Naive thymus-derived CD4-positive, alpha-beta T cell (primary cell): ENCODE measurements at regions of chr18 and their contacts with region 1.

Region 1: GRCh38 chr18:46222710-46223360 is 118.7 kb downstream of the HAUS1 start:
- DNase-seq: peak in 2 of 9 donors; percentile 7 to 16
- ATAC-seq: peak; percentile 75
- H3K4me3 ChIP-seq: no peak overlapping the region
- H3K4me3 Mint-ChIP-seq: peak overlapping the region; percentile 3 to 71 (median 52)
- H3K27ac ChIP-seq: peak overlapping the region; percentile 5
- H3K27ac Mint-ChIP-seq: peak overlapping the region; percentile 9 to 81 (median 50)
- H3K4me1 ChIP-seq: peaks cover 6 to 27% of the 10 kb centered on the region in 2 donors
- H3K4me1 Mint-ChIP-seq: peaks cover 46 to 93% (median 84%) of the 10 kb centered on the region in 7 donors
- H3K27me3 ChIP-seq: no peaks in the 10 kb centered on the region
- H3K27me3 Mint-ChIP-seq: no peaks in the 10 kb centered on the region

Region 2: DNA sequence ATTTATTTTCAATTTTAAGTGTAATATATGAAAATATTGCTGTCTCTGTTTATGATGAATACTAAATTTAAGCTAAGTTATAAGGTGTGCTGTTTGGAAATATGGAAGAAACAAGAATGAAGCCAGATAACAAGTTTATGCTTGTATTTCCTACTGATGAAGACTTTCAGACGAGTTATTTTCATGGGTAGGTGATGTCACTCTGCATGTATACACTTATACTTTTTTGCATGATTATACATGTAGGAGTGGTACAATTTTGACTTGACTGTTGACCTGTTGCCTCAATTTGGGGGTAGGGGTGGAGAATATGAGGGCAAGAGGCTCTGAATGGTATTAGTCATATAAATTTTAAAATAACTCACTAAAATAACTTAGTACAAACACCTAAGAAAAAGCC is 15.1 kb after region 1 on chr18:
- CTCF ChIA-PET with region 1: interaction called, 3 read pairs
- POLR2A ChIA-PET with region 1: interaction called, 3 read pairs
- intact Hi-C with region 1: loop called in 1 of 2 experiments (anchors 2 kb)
- DNase-seq: no peak
- ATAC-seq: no peak
- H3K4me3 ChIP-seq: no peak overlapping the region
- H3K4me3 Mint-ChIP-seq: no peak overlapping the region
- H3K27ac ChIP-seq: no peak overlapping the region
- H3K27ac Mint-ChIP-seq: no peak overlapping the region
- H3K4me1 ChIP-seq: peaks cover 0 to 15% of the 10 kb centered on the region in 2 donors
- H3K4me1 Mint-ChIP-seq: peaks cover 17 to 77% (median 56%) of the 10 kb centered on the region in 7 donors
- H3K27me3 ChIP-seq: no peaks in the 10 kb centered on the region
- H3K27me3 Mint-ChIP-seq: no peaks in the 10 kb centered on the region

Region 3: DNA sequence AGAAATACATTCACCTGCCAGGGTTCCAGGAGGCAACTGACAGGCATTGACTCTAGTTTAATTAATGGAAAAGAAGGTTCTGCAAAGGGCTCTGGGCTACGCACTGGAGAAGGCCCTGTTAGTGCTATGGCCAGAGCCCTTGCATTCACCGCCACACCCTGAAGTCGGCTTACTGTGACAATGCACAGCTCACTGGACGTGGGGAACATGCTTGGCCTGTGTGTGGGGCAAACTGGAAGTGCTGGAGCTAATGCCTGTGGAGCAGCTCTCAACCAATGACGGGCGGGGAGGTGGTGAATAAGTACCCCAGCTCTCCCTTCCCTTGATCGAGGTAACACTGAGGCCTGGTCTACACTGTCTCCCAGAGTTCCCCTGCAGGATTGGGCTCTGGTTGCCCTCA is 91.2 kb after region 1 on chr18:
- CTCF ChIA-PET with region 1: no interaction called
- POLR2A ChIA-PET with region 1: no interaction called
- intact Hi-C with region 1: no loop called
- DNase-seq: no peak
- ATAC-seq: no peak
- H3K4me3 ChIP-seq: no peak overlapping the region
- H3K4me3 Mint-ChIP-seq: no peak overlapping the region
- H3K27ac ChIP-seq: no peak overlapping the region
- H3K27ac Mint-ChIP-seq: no peak overlapping the region
- H3K4me1 ChIP-seq: no peaks in the 10 kb centered on the region
- H3K4me1 Mint-ChIP-seq: peaks cover 0 to 4% (median 0%) of the 10 kb centered on the region in 7 donors
- H3K27me3 ChIP-seq: no peaks in the 10 kb centered on the region
- H3K27me3 Mint-ChIP-seq: peaks cover 0 to 7% (median 0%) of the 10 kb centered on the region in 5 donors

Region 4: DNA sequence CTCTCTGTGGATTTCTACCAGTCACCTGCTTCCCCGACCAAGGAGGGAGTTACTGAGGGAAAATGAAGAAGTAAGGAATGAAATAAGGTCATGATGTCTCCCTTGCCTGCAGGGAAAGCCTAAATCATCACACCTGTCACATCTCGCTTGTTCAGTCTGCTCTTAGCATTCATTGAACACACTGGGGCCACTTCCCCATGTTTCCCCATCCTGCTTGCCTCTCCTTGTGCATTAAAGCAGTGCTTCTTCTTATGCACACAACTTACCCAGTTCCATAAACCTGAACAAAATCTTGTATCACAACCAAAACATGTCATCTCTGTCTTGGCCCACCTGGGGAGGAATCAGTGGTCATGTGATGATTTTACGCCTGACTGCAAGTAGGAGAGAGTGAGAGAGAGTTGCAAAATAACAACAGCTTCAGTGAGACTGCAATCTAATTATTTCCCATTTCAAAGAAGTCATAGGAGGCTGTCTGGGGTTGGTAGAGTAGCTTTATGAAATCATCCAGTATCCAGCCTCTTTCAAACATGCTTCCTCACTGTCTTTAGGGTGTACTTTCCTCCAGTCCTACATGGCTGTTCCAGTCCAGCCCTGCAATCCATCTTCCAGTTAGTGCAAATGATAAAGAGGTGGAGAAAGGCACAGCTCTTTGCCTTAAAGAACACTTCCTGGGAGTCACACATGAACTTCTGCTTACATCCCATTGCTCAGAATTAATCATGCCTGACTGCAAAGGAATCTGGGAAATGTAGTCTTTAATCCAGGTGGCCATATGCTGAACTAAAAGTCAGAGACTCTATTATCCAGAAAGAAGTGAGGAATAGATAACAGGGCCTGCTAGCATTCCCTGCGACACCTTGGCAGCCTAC is 101.5 kb after region 1 on chr18:
- CTCF ChIA-PET with region 1: no interaction called
- POLR2A ChIA-PET with region 1: no interaction called
- intact Hi-C with region 1: no loop called
- DNase-seq: no peak
- ATAC-seq: peak; percentile 79
- H3K4me3 ChIP-seq: no peak overlapping the region
- H3K4me3 Mint-ChIP-seq: no peak overlapping the region
- H3K27ac ChIP-seq: no peak overlapping the region
- H3K27ac Mint-ChIP-seq: peak overlapping the region in 2 of 9 donors; percentile 4 to 31
- H3K4me1 ChIP-seq: peaks cover 0 to 2% of the 10 kb centered on the region in 2 donors
- H3K4me1 Mint-ChIP-seq: peaks cover 0 to 8% (median 0%) of the 10 kb centered on the region in 7 donors
- H3K27me3 ChIP-seq: no peaks in the 10 kb centered on the region
- H3K27me3 Mint-ChIP-seq: peaks cover 0 to 13% (median 0%) of the 10 kb centered on the region in 5 donors